Heart right ventricle (tissue), 16 donors: ENCODE measurements at regions of chr2 and their contacts with region 1.

Region 1: DNA sequence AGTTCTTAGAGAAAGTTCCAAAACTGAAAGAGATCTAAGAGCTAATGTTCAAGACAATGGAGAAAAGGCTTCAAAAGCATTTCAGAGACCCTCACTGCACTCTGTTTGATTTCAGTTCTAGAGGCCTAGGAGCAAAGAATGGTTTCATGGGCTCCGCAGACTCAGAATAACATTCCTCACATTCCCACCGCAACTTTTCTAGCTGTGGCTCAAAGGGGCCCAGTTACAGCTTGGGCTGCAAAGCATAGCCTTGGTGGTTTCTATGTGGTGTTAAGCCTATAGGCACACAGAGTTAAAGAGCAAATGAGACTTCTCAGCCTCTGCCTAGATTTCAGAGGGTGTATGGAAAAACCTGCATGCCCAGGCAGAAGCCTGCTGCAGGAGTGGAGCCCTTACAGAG is 73.0 kb downstream of the FSIP2 start:
- DNase-seq: no peak
- ATAC-seq: no peak
- H3K4me3 ChIP-seq: no peak overlapping the region
- H3K27ac ChIP-seq: no peak overlapping the region
- H3K4me1 ChIP-seq: no peaks in the 10 kb centered on the region
- H3K27me3 ChIP-seq: no peaks in the 10 kb centered on the region
- CTCF ChIP-seq: no peak

Region 2: DNA sequence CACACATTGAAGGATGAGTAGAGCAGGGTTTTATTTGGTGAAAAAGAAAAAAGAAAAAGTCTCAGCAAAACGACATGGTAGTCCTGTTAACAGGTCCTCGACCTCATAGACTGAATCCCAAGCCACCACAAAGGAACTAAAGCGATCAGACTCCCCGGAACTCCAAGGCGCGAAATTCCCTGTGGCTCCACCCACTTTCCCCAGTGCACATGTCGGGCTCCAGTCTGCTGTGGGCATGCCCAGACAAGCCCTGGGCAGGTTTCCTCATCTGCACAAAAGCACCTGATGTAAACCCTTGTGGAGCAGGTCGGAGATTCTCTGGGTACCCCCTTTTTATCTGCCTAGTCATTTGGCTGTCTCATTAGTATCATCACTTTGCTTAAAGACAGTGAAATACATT is 243.6 kb before region 1 on chr2:
- intact Hi-C with region 1: no loop called
- DNase-seq: no peak
- ATAC-seq: no peak
- H3K4me3 ChIP-seq: no peak overlapping the region
- H3K27ac ChIP-seq: no peak overlapping the region
- H3K4me1 ChIP-seq: no peaks in the 10 kb centered on the region
- H3K27me3 ChIP-seq: no peaks in the 10 kb centered on the region
- CTCF ChIP-seq: no peak

Region 3: GRCh38 chr2:185718713-185719112 is 92.9 kb before region 1 on chr2:
- intact Hi-C with region 1: no loop called
- DNase-seq: no peak
- ATAC-seq: no peak
- H3K4me3 ChIP-seq: no peak overlapping the region
- H3K27ac ChIP-seq: no peak overlapping the region
- H3K4me1 ChIP-seq: no peaks in the 10 kb centered on the region
- H3K27me3 ChIP-seq: no peaks in the 10 kb centered on the region
- CTCF ChIP-seq: no peak

Region 4: DNA sequence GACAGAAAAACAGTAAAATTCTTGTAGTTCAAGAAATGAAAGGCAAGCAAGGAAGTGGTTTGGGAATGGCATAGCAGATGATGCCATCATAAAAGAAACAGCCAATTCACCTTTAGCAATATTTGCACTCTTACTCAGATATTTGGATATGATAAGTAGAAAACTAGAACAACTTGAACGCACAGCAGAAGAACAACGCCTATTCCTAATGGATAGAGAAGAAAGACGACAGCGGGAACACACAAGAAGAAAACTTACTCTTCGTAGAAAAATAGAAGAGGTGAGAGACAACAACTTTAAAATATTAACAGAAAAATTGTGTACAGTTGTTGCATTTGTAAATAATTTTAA is 65.1 kb before region 1 on chr2:
- intact Hi-C with region 1: no loop called
- DNase-seq: no peak
- ATAC-seq: no peak
- H3K4me3 ChIP-seq: no peak overlapping the region
- H3K27ac ChIP-seq: no peak overlapping the region
- H3K4me1 ChIP-seq: no peaks in the 10 kb centered on the region
- H3K27me3 ChIP-seq: no peaks in the 10 kb centered on the region
- CTCF ChIP-seq: no peak

Region 5: DNA sequence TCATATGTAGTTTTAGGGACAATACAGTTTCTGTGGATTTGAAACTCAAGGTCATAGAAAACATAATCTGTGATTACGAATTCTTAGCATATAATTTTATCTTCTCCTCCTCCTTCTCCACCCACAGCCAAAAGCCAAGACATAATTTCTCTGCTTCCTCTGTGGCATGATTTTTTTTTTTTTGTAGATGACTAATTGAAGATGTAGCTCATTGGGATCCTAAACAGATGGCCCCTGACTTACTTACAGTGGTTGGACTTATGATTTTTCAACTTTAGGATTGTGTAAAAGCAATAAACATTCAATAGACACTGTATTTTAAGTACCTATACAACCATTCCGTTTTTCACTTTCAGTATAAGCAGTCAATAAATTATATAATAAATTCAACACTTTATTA is 30.7 kb before region 1 on chr2:
- intact Hi-C with region 1: loop called in 1 of 10 experiments (anchors 2 kb)
- DNase-seq: no peak
- ATAC-seq: no peak
- H3K4me3 ChIP-seq: no peak overlapping the region
- H3K27ac ChIP-seq: no peak overlapping the region
- H3K4me1 ChIP-seq: no peaks in the 10 kb centered on the region
- H3K27me3 ChIP-seq: no peaks in the 10 kb centered on the region
- CTCF ChIP-seq: no peak